ENCODE measurements at regions of chr9 and their contacts with region 1.

Region 1: GRCh38 chr9:37913480-37914153 is 9.7 kb upstream of the SLC25A51 start:
- DNase-seq: peak; percentile 86 to 89 (median 88)
- H3K4me3 ChIP-seq: no peak overlapping the region
- H3K4me3 Mint-ChIP-seq: no peak overlapping the region
- H3K27ac ChIP-seq: peak overlapping the region; percentile 10 to 63
- H3K27ac Mint-ChIP-seq: peak overlapping the region; percentile 68 to 95 (median 87)
- H3K4me1 ChIP-seq: peaks cover 30 to 34% of the 10 kb centered on the region in 2 donors
- H3K4me1 Mint-ChIP-seq: peaks cover 34% of the 10 kb centered on the region
- H3K27me3 ChIP-seq: no peaks in the 10 kb centered on the region
- H3K27me3 Mint-ChIP-seq: no peaks in the 10 kb centered on the region
- CTCF ChIP-seq: peak; percentile 97

Region 2: GRCh38 chr9:37769306-37769705 is 144.3 kb before region 1 on chr9:
- intact Hi-C with region 1: no loop called
- DNase-seq: no peak
- H3K4me3 ChIP-seq: no peak overlapping the region
- H3K4me3 Mint-ChIP-seq: no peak overlapping the region
- H3K27ac ChIP-seq: no peak overlapping the region
- H3K27ac Mint-ChIP-seq: no peak overlapping the region
- H3K4me1 ChIP-seq: no peaks in the 10 kb centered on the region
- H3K4me1 Mint-ChIP-seq: no peaks in the 10 kb centered on the region
- H3K27me3 ChIP-seq: no peaks in the 10 kb centered on the region
- H3K27me3 Mint-ChIP-seq: no peaks in the 10 kb centered on the region
- CTCF ChIP-seq: no peak

Region 3: GRCh38 chr9:38008168-38009034 is 94.8 kb after region 1 on chr9:
- intact Hi-C with region 1: loop called (anchors 5 to 10 kb)
- DNase-seq: peak; percentile 86 to 95 (median 90)
- H3K4me3 ChIP-seq: no peak overlapping the region
- H3K4me3 Mint-ChIP-seq: peak overlapping the region; percentile 26 to 60
- H3K27ac ChIP-seq: peak overlapping the region; percentile 67 to 78
- H3K27ac Mint-ChIP-seq: peak overlapping the region; percentile 89 to 95 (median 93)
- H3K4me1 ChIP-seq: peaks cover 18 to 29% of the 10 kb centered on the region in 2 donors
- H3K4me1 Mint-ChIP-seq: peaks cover 36% of the 10 kb centered on the region
- H3K27me3 ChIP-seq: no peaks in the 10 kb centered on the region
- H3K27me3 Mint-ChIP-seq: peaks cover 0 to 6% (median 3%) of the 10 kb centered on the region in 3 donors
- CTCF ChIP-seq: no peak

Region 4: DNA sequence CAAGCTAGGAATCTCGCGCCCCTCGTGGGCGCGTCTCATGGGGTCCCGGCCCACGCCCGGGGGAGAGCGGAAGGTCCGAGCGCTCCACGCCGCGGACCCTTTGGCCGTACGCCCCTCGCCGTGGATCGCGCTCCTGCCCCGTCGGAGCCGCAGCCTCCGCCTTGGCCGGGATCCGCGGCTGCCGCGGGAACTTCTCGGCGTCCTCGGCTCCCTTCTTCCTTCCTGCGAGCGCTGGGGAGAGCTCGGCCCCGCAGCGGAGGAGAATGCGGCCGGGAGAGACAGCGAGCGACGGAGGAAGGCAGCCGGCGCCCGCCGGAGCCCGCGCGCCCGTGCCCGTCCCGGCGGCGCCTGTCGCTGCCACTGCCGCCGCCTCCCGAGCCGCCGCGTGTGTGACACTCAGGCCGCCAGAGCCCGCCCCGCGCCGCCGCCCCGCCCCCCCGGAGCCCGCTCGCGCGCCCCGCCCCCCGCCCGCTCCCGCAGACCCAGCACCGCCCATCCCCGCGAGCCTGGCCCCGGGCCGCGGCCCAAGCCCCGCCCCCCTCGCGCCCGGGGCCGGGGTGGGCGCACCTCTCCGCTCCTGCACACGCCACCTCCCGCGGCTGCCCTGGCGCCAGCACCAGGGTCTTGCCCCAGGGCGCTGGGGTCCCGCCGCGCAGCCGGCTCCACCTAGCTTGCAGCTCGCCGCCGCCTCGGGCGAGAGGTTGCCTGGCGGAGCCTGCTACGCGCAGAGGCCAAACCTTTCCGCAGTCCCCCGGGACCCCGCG is 155.4 kb after region 1 on chr9 and contains the start of gene SHB:
- intact Hi-C with region 1: loop called (anchors 5 kb)
- DNase-seq: peak; percentile 63 to 75 (median 66)
- H3K4me3 ChIP-seq: peak within 1 kb of the TSS; percentile 79 to 91 (median 89)
- H3K4me3 Mint-ChIP-seq: peak within 1 kb of the TSS; percentile 94 to 98
- H3K27ac ChIP-seq: peak within 1 kb of the TSS; percentile 59 to 76
- H3K27ac Mint-ChIP-seq: peak within 1 kb of the TSS; percentile 16 to 88 (median 76)
- H3K4me1 ChIP-seq: peaks cover 23 to 34% of the 10 kb centered on the region in 2 donors
- H3K4me1 Mint-ChIP-seq: peaks cover 49% of the 10 kb centered on the region
- H3K27me3 ChIP-seq: peaks cover 2 to 9% of the 10 kb centered on the region in 2 donors
- H3K27me3 Mint-ChIP-seq: peaks cover 20 to 34% (median 27%) of the 10 kb centered on the region in 3 donors
- CTCF ChIP-seq: peak; percentile 38
- polyA plus RNA-seq, gene SHB: 0.27 to 1.3 (median 0.31) TPM

Region 5: DNA sequence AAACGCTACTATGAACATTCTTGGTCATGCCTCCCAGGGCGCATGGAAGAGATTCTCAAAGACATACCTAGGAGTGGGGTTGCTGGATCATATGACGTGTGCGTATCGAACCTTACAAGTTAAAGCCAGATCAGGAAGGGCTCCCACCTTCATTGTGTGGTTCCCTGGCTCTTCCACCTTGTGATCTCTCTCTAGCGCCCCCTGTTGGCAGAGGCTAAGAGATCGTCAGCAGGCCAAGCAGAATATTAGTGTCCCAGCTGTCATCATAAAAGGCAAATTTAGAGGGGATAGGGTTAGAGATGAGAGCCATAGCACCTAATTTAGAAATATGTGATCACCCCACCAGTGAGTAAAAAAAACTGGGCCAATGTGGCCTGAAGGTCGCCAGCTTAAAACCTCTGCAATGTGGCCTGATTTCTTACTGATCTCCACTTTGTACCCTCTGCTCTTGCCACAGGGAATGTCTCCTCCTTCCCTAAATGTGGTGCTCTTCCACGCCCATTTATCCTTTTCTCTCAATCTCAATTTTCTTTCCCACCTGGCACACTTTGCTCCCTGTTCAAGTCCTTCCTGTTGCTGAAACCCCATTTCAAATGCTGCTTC is 247.1 kb after region 1 on chr9:
- intact Hi-C with region 1: loop called (anchors 5 kb)
- DNase-seq: peak; percentile 35 to 64 (median 41)
- H3K4me3 ChIP-seq: no peak overlapping the region
- H3K4me3 Mint-ChIP-seq: no peak overlapping the region
- H3K27ac ChIP-seq: no peak overlapping the region
- H3K27ac Mint-ChIP-seq: no peak overlapping the region
- H3K4me1 ChIP-seq: no peaks in the 10 kb centered on the region
- H3K4me1 Mint-ChIP-seq: no peaks in the 10 kb centered on the region
- H3K27me3 ChIP-seq: no peaks in the 10 kb centered on the region
- H3K27me3 Mint-ChIP-seq: peaks cover 0 to 9% (median 6%) of the 10 kb centered on the region in 3 donors
- CTCF ChIP-seq: peak; percentile 94

Region 6: GRCh38 chr9:38408719-38409118 is 495.1 kb after region 1 on chr9:
- intact Hi-C with region 1: loop called in 1 of 2 experiments (anchors 10 kb)
- DNase-seq: no peak
- H3K4me3 ChIP-seq: no peak overlapping the region
- H3K4me3 Mint-ChIP-seq: no peak overlapping the region
- H3K27ac ChIP-seq: no peak overlapping the region
- H3K27ac Mint-ChIP-seq: no peak overlapping the region
- H3K4me1 ChIP-seq: no peaks in the 10 kb centered on the region
- H3K4me1 Mint-ChIP-seq: no peaks in the 10 kb centered on the region
- H3K27me3 ChIP-seq: no peaks in the 10 kb centered on the region
- H3K27me3 Mint-ChIP-seq: peaks cover 1 to 11% (median 4%) of the 10 kb centered on the region in 3 donors
- CTCF ChIP-seq: no peak

Measured in CD14-positive monocyte (primary cell).